Dorsolateral prefrontal cortex (tissue), 120 donors: ENCODE measurements at regions of chr19 and their contacts with region 1.

Region 1: DNA sequence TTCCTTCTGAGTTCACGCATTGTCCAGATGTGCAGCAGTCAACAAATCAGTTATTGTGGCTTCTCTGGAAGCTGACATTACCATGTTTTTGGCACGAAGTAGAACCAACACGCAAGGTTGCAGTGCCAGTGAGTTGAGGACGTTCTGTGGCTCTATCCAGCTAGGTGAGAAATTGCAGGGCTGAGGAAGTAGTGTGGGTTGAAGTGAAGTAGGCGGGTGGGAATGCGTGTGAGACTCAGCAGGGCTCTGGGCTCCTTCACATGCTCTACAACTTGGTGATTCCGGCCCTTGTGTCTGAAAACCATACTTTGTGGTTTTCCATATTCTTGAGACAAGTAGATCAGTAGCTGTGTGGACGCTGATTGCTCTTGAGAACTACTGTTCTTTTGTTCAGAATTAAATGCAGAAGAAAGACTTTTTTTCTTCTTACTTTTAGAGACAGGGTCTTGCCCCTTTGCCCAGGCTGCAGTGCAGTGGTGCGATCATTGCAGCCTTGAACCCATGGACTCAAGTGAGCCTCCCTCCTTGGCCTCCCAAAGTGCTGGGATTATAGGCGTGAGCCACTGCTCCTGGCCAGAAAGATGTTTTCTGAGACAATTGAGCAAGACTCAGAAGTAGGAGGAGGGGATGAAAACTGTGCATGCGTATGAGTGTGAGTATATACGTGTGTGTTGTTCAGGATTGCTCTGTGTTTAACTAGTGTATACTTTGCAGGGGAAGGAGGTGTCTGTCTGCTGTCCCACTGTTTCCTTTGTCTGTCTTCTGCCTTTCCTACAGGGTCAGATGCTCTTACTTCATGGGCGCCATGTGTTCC is 46.2 kb downstream of the GATAD2A start:
- DNase-seq: peak in 4 of 10 donors; percentile 24 to 66 (median 60)
- H3K4me3 ChIP-seq: no peak overlapping the region
- H3K27ac ChIP-seq: peak overlapping the region in 4 of 59 donors; percentile 21 to 59 (median 28)
- H3K27me3 ChIP-seq: no peaks in the 10 kb centered on the region
- CTCF ChIP-seq: no peak

Region 2: DNA sequence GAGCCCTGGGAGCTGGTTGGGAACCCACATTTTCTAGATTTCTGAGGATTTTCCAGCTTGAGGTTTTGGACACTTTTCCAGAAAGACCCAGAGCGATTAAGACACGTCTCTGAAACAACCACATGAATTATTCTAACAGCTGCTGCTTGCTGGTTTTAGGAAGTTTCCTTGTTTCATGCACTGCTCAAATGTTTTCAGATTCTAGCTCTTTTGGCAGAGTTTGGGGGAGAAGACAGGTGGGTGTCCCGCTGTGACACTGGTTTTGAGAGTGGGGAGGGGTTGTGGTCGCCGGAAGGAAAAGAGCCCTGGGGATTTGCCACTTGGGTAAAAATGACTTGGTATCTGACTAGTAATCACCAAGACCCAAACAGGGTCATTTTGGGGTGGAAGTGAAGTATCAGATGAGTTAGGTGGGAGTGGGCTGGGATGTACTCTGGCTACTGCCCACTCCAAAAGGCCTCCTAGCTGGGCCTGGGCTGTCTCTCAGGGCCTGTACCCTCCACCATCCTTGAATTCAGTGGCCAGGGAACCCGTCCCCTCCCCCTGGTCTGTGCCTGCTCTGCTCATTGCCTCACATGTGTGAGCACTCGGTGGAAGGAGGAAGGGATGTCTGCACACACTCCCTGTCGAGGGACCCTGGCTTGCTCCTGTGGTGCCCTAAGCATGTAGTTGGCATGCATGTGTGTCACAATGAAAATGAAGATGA is 32.9 kb before region 1 on chr19:
- intact Hi-C with region 1: loop called in 1 of 2 experiments (anchors 5 kb)
- DNase-seq: no peak
- H3K4me3 ChIP-seq: no peak overlapping the region
- H3K27ac ChIP-seq: no peak overlapping the region
- H3K27me3 ChIP-seq: no peaks in the 10 kb centered on the region
- CTCF ChIP-seq: no peak

Region 3: DNA sequence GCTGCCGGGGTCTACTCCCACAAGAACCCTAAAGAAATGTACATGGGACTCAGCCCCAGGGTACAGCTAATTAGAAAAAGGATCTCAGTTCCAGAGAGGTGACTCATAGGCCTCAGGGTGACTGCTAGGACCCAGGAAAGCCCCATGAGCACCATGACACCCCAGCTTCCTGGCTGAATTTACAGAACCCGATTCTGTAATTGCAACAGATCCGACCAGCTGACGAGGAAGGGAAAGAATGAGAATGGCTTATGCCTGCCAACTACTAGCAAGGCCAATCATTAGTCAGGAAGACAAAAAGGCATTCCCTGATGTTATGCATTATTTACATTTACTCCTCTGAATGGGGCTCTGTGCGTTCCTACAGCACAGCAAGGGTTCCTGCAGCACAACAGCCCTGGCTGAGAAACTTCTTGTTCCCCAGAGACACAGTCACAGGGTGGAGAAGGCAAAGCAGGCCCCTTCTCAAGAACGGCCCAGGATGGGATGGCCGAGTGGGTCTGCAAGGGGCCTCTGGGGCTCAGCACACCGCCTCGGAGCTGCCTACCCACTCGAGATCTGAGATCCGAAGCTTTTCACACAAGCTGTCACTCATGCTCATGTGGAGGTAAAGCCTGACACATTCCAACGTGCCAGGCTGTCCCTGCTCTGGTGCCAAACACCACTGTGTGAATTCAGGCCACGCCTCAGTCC is 139.6 kb after region 1 on chr19:
- intact Hi-C with region 1: no loop called
- DNase-seq: no peak
- H3K4me3 ChIP-seq: no peak overlapping the region
- H3K27ac ChIP-seq: no peak overlapping the region
- H3K27me3 ChIP-seq: no peaks in the 10 kb centered on the region
- CTCF ChIP-seq: no peak